A549 (cell line): ENCODE measurements at regions of chr1 and their contacts with region 1.

Region 1: DNA sequence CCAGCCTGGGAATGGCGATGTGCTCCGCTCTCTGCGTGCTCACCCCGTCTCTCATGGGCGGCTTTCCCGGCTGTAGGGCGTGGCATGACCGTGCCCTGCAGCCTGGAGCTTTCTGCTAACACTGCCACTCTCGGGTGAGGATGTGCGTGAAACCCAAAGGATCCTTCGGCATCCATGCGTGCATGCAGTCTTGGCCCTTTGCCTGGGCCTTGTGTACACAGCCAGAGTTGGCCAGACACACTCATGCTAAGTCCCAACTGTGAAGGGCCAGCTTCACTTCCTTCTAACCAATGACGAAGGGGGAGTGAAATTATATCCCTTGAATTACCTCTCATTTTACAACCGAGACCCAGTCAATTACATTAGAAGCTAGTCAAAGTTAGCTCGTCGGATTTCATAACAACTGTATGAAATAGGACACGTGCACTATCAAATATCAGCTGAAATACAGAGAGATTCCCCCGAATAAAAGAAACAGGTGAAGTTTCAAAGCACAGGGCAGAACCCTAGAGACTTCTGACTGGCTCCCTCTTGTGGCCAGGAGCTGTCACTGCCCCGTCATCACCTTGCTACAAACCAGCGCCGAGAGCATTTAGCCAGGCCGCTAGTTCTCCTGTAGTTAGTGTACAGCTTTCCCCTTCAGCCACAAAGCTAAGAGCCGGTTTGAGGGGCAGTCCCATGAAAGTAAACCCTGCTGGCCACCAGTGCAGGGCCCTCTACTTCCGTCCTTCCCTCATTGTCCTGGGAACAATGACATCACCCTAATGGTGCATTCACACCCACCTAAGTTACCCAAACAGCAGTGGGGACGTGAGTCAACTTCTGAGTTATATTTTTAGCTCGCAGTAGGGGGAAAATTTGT is 63.4 kb upstream of the COA6 start:
- DNase-seq: peak; percentile 86
- ATAC-seq: peak; percentile 93
- H3K4me3 ChIP-seq: peak overlapping the region; percentile 30
- H3K27ac ChIP-seq: peak overlapping the region; percentile 67 to 81
- H3K4me1 ChIP-seq: peaks cover 24% of the 10 kb centered on the region
- CTCF ChIP-seq: peak; percentile 94
- EP300 ChIP-seq: no peak; a peak in 1 of 5 replicates
- POLR2A ChIP-seq: no peak
- RAD21 ChIP-seq: peak; percentile 72 to 76

Region 2: DNA sequence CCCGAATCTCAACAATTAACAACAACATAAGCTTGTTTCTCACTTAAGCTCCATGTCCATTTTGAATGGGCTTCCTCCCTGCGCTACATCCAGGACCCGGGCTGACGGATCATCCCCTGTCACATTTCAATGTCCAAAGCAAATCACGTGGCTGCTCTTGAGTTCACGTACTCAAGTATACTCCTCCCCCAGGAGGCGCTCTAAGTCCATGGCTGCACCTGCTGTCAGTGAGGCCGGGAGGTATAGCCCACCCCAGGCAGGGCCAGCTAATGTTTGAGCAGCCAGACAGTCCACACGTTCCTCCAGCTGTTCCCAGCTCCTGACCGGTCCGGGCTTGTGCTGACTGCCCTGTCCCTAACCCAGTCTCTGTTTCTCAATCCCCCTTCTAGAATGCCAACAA is 184.5 kb before region 1 on chr1:
- CTCF ChIA-PET with region 1: interaction called, 116 read pairs
- POLR2A ChIA-PET with region 1: interaction called, 3 read pairs
- DNase-seq: peak in 1 of 2 experiments; percentile 72
- ATAC-seq: peak; percentile 73 to 94; a peak in 5 of 6 replicates
- H3K4me3 ChIP-seq: no peak overlapping the region
- H3K27ac ChIP-seq: peak overlapping the region in 1 of 2 experiments; percentile 38; a peak in 2 of 6 replicates
- H3K4me1 ChIP-seq: peaks cover 28% of the 10 kb centered on the region
- CTCF ChIP-seq: peak; percentile 44
- EP300 ChIP-seq: no peak
- POLR2A ChIP-seq: no peak
- RAD21 ChIP-seq: peak; percentile 69 to 79

Region 3: DNA sequence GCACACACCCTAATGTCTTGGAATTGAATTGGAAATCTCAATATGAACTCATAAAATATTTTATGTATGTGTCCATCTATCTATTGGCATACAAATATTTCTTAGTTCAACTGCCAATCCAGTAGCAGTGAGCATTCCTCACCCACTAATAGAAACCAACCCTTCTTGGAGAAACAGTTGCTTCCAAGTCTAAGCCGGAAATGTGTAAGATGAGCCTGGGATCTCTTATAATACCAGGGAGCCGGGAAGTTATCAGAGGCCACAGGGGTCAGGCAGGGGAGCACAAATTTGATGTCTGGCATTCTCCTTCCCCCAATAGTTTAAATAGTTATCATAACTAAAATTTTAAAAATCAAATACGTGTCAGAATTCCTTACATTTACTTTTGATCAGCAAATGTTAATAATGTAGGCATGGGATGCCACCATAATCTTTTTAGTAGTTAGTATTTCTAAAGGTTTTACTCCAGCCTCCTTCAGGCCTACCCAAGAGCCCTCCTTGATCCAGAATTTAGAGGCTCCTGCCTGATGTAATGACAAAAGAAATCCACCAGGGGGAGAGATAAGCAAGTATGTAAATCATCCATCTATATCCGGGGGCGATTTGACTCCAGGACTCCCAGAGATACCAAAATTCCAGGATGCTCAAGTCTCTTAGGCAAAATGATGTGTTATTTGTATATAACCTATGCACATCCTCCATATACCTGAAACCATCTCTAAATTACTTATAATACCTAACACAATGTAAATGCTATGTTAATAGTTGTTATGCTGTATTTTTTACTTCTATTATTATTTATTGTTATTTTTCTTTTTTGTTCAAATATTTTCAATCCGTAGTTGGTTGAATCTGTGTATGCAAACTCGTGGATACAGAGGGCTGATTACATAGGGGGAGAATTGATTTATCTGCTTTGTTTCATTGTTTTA is 155.2 kb before region 1 on chr1:
- CTCF ChIA-PET with region 1: interaction called, 24 read pairs
- POLR2A ChIA-PET with region 1: no interaction called
- DNase-seq: peak; percentile 51 to 87
- ATAC-seq: peak; percentile 94 to 96; a peak in 5 of 6 replicates
- H3K4me3 ChIP-seq: no peak overlapping the region
- H3K27ac ChIP-seq: peak overlapping the region; percentile 44 to 62
- H3K4me1 ChIP-seq: peaks cover 9% of the 10 kb centered on the region; the same call in 1 of the 3 replicates
- CTCF ChIP-seq: peak; percentile 75
- EP300 ChIP-seq: no peak
- POLR2A ChIP-seq: no peak
- RAD21 ChIP-seq: peak; percentile 74 to 82

Region 4: DNA sequence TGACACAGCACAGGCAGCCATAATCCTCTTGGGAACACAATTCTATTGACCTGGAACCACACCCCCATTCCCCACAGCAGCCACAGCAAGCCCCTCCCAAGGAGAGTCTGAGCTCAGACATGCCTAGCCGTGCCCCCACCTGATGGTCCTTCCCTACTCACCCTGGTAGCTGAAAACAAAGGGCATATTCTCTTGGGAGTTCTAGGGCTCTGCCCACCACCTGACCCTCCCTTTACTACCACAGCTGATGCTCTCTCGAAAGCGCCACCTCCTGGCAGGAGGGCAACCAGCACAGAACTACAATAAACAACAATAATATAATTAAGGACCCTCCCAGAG is 121.4 kb before region 1 on chr1:
- CTCF ChIA-PET with region 1: interaction called, 39 read pairs
- POLR2A ChIA-PET with region 1: no interaction called
- DNase-seq: peak in 1 of 2 experiments; percentile 18
- ATAC-seq: no peak
- H3K4me3 ChIP-seq: no peak overlapping the region
- H3K27ac ChIP-seq: peak overlapping the region in 1 of 2 experiments; percentile 60; a peak in 3 of 6 replicates
- H3K4me1 ChIP-seq: peaks cover 29% of the 10 kb centered on the region
- CTCF ChIP-seq: no peak
- EP300 ChIP-seq: no peak
- POLR2A ChIP-seq: no peak
- RAD21 ChIP-seq: no peak

Region 5: DNA sequence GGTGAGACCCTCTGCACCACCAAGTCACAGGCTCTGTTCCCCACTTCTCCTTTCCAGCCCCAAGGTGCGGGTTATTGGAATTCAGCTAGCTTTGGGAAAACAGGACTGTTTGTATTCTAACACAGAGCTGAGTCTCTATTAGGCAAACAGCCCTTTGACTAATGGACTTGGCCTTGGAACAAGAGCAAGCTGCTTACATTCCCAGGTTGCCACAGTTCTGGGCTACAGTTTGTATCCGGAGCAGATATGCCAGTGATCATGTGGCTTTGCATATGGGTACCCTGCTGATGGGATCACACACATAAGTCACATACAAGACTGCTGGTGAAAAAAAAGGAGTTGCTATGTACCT is 47.1 kb before region 1 on chr1:
- CTCF ChIA-PET with region 1: interaction called, 14 read pairs
- POLR2A ChIA-PET with region 1: no interaction called
- DNase-seq: no peak
- ATAC-seq: peak; percentile 46 to 53; a peak in 5 of 6 replicates
- H3K4me3 ChIP-seq: no peak overlapping the region
- H3K27ac ChIP-seq: no peak overlapping the region; a peak in 1 of 6 replicates
- H3K4me1 ChIP-seq: peaks cover 21% of the 10 kb centered on the region; the same call in 2 of the 3 replicates
- CTCF ChIP-seq: no peak
- EP300 ChIP-seq: no peak
- POLR2A ChIP-seq: no peak
- RAD21 ChIP-seq: no peak

Region 6: GRCh38 chr1:234281826-234282489 is 27.9 kb before region 1 on chr1:
- CTCF ChIA-PET with region 1: interaction called, 16 read pairs
- POLR2A ChIA-PET with region 1: no interaction called
- DNase-seq: no peak
- ATAC-seq: no peak
- H3K4me3 ChIP-seq: no peak overlapping the region
- H3K27ac ChIP-seq: no peak overlapping the region
- H3K4me1 ChIP-seq: no peaks in the 10 kb centered on the region
- CTCF ChIP-seq: no peak
- EP300 ChIP-seq: no peak
- POLR2A ChIP-seq: no peak
- RAD21 ChIP-seq: no peak

Region 7: DNA sequence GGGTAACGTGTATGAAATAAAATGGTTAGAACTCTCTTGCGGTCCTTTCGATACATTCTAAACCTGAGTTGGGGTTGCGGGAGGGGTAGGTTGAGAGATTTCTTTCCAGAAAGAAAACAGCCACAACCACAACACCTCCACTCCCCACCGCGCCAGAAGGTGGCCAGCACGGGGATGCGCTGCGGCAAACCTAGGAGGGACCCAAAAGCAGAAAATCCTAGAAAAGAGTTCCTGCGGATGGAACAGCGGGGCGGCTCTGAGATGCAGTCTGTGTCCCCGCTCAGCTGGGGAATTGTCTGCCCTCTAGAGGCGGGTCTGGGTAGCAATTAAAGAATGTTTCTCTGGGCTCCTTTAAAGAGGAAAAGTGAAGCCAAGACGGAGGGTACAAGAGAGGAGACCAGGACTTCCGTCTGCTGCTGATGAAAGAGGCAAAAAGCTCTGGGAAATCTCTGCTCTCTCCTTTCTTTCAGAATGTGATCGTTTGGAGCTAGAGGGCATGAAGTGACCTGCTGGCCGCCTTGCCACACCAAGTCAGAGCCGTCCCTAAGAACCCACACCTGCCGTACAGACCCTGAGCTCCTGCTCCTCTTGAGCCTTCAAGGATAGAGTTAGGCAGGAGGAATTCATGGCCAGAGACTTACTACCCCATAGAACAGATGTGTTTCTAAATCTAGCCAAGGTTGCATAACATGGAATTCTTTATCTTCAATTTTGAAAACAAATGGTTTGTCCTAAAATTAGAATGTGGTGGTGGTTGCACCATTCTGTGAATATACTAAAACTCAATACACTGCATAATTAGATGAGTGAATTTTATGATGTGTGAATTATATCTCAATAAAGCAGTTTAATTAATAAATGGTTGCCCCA is 16.9 kb after region 1 on chr1:
- CTCF ChIA-PET with region 1: interaction called, 67 read pairs
- POLR2A ChIA-PET with region 1: no interaction called
- DNase-seq: peak; percentile 62 to 66
- ATAC-seq: peak; percentile 92 to 95
- H3K4me3 ChIP-seq: 0 out of 3 replicates have a peak overlapping the region, but pooled peaks have one; percentile 24
- H3K27ac ChIP-seq: peak overlapping the region; percentile 21 to 63; a peak in 2 of 6 replicates
- H3K4me1 ChIP-seq: 0 out of 3 replicates have a peak, but pooled peaks cover 5% of the 10 kb centered on the region
- CTCF ChIP-seq: peak; percentile 82
- EP300 ChIP-seq: no peak
- POLR2A ChIP-seq: no peak
- RAD21 ChIP-seq: peak; percentile 71 to 73

Region 8: DNA sequence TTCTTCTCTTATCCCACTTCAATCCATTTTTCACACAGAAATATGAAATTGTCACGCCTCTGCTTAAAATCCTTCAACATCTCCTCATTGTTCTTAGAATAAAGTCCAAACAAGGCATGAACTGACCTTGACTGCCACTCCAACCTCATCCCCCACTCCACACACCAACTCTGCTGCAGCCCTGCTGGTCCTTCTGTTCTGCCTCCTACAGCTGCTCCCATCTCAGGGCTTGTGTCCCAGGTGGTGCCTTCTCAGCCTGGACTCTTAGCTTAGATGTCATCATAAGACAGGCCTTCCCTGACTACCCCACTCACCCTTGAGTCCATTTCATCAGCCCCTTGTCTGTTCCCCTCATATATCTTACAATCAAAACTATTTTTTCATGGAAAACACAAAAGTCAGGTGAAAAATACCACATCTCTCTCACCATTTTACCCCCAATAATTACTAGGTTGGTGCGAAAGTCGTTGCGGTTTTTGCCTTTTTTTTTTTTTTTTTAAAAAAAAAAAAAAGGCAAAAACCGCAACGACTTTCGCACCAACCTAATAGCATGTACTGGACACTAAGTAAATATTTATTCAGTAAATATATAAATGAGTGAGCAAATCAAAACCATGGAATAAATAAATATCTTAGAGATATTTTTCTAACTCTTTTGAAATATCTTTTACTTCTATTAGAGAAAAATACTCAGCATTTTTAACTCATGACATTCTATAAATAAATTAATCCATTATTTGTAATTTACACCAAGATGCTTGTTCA is 158.9 kb after region 1 on chr1:
- CTCF ChIA-PET with region 1: no interaction called
- POLR2A ChIA-PET with region 1: no interaction called
- DNase-seq: no peak
- ATAC-seq: no peak
- H3K4me3 ChIP-seq: no peak overlapping the region
- H3K27ac ChIP-seq: no peak overlapping the region
- H3K4me1 ChIP-seq: 0 out of 3 replicates have a peak, but pooled peaks cover 2% of the 10 kb centered on the region
- CTCF ChIP-seq: no peak
- EP300 ChIP-seq: no peak
- POLR2A ChIP-seq: no peak
- RAD21 ChIP-seq: no peak